Activated CD8-positive, alpha-beta T cell treated with anti-CD3 and anti-CD28 coated beads for 36 hours (primary cell): ENCODE measurements at regions of chr3 and their contacts with region 1.

Region 1: DNA sequence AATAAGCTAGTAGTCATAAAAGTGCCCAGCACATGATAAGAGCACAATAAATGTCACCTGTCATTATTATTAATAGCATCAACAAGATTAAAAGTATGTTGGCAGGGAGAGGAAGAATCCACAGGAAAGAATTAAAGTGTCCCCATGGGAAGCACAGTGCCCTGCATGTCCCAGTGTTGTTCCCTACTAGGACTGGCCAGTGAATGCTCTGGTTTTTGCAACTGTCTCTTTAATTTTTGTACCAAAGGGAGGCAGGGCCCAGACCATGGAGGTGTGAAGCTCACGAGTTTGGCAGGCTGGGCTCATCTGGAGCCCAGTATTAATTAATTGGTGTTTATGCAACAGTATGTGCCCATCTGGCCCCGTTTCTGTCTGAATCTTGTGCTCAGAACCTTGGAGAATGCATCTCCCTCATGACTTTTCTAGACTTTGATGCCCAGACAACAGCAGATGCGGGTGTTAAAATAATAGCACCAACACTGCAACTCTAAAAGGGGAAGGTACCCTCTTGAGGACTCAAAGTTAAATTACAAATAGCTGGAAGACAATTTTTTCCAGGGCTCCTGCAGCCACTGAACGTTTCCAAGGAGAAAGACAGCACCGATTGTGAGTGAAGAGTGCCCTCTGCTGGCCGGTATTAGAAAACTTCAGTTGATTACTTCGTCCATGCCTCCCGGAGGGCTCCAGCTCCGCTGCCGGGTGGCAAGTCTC is 71.9 kb upstream of the SPATA12 start:
- DNase-seq: peak; percentile 79
- ATAC-seq: peak; percentile 57
- H3K4me3 Mint-ChIP-seq: no peak overlapping the region
- H3K27ac Mint-ChIP-seq: no peak overlapping the region
- H3K4me1 Mint-ChIP-seq: peaks cover 33% of the 10 kb centered on the region
- H3K27me3 Mint-ChIP-seq: peaks cover 7% of the 10 kb centered on the region
- CTCF ChIP-seq: peak; percentile 99

Region 2: DNA sequence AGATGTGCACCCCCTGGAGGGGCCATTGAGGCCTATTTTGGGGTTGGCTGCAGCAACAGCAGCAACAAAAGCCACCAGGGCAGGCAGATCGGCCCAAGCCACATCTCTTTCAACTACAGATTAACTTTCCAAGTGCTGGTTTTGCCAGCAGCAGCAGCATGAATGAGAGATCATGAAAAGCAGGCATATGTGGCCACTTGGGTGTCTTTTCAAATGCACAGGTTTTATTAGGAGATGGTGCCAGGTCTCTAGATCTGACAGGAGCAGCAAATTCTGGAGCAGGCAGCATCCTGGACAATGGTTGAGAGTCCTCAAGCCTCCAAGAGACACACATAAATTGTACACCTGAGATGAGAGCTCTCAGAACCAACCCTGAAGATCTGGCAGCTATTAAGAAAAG is 463.3 kb before region 1 on chr3:
- CTCF ChIA-PET with region 1: no interaction called
- POLR2A ChIA-PET with region 1: no interaction called
- intact Hi-C with region 1: no loop called
- DNase-seq: no peak
- ATAC-seq: no peak
- H3K4me3 Mint-ChIP-seq: no peak overlapping the region
- H3K27ac Mint-ChIP-seq: no peak overlapping the region
- H3K4me1 Mint-ChIP-seq: no peaks in the 10 kb centered on the region
- H3K27me3 Mint-ChIP-seq: peaks cover 2% of the 10 kb centered on the region
- CTCF ChIP-seq: no peak

Region 3: GRCh38 chr3:56693750-56694149 is 294.9 kb before region 1 on chr3:
- CTCF ChIA-PET with region 1: interaction called, 47 read pairs
- POLR2A ChIA-PET with region 1: no interaction called
- intact Hi-C with region 1: no loop called
- DNase-seq: no peak
- ATAC-seq: no peak
- H3K4me3 Mint-ChIP-seq: peak overlapping the region; percentile 79
- H3K27ac Mint-ChIP-seq: peak overlapping the region; percentile 27
- H3K4me1 Mint-ChIP-seq: peaks cover 44% of the 10 kb centered on the region
- H3K27me3 Mint-ChIP-seq: no peaks in the 10 kb centered on the region
- CTCF ChIP-seq: no peak

Region 4: DNA sequence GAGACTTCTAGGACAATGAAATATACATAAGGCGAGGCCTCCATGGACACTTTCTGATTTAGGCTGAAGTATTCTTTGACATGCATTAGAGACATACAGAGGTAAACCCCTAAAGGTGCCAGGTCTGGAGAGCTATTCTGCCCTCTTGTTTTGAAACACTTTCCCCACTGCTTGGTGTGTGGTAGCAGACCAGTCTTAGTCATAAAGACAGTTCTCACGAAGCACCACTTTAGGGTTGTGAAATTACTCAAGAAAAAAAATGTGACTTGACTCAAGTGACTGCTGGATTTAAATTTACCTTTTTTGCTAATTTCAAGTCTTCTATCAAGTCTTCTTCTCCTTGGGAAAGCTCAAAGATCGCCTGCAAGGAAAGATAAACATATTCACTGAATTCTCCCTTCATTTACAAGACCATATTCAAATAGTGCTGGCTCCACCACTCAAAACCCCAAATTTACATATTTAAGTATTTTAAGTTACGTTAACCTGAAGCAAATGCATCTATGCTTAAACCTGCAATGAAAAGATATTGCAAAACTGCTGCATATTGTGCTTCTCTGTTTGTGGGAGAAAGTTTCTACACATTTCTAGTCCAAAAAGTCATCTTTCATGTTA is 235.3 kb before region 1 on chr3:
- CTCF ChIA-PET with region 1: interaction called, 11 read pairs
- POLR2A ChIA-PET with region 1: no interaction called
- intact Hi-C with region 1: no loop called
- DNase-seq: peak; percentile 75
- ATAC-seq: peak; percentile 93
- H3K4me3 Mint-ChIP-seq: no peak overlapping the region
- H3K27ac Mint-ChIP-seq: peak overlapping the region; percentile 73
- H3K4me1 Mint-ChIP-seq: peaks cover 63% of the 10 kb centered on the region
- H3K27me3 Mint-ChIP-seq: no peaks in the 10 kb centered on the region
- CTCF ChIP-seq: no peak

Region 5: DNA sequence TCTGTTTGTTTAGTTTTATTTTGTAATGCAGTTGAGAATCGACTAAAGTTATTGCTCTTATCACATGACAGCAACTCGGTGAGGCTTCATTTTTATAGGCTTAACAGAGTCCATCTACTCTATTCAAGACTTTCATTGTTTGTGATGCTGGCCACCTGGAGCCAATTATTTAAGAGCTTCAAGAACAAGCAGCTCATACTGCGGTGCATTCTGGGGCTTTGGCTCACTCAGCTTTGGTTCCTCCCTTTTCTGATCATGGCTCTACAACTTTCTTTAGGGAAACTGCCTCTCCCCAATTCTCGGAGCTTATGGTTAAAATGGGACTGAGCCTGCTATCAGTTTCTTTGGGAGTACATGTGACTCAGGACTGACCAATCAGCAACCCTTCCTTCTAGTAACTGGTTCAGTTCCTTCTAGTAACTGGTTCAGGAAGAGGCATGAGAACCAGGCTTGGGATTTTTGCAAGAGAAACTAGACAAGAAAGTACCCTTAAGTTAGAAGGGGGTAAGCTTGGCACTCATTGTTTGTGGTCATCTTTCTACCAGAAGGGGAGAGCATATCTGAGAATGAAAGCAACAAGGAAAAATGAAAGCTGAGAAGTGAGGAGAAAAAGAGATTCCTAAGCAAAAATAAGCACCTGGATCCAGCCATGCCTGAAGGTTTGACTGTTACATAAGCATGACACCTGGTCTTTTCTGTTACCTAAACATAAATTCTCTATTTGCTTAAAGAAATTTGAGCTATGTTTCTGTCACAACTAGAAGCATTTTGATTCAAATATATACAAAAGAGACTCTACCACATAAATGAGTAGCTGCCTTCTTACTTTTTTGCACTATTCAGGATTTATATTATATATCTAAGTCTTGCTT is 162.8 kb before region 1 on chr3:
- CTCF ChIA-PET with region 1: interaction called, 25 read pairs
- POLR2A ChIA-PET with region 1: no interaction called
- intact Hi-C with region 1: no loop called
- DNase-seq: no peak
- ATAC-seq: no peak
- H3K4me3 Mint-ChIP-seq: no peak overlapping the region
- H3K27ac Mint-ChIP-seq: no peak overlapping the region
- H3K4me1 Mint-ChIP-seq: peaks cover 44% of the 10 kb centered on the region
- H3K27me3 Mint-ChIP-seq: no peaks in the 10 kb centered on the region
- CTCF ChIP-seq: no peak

Region 6: DNA sequence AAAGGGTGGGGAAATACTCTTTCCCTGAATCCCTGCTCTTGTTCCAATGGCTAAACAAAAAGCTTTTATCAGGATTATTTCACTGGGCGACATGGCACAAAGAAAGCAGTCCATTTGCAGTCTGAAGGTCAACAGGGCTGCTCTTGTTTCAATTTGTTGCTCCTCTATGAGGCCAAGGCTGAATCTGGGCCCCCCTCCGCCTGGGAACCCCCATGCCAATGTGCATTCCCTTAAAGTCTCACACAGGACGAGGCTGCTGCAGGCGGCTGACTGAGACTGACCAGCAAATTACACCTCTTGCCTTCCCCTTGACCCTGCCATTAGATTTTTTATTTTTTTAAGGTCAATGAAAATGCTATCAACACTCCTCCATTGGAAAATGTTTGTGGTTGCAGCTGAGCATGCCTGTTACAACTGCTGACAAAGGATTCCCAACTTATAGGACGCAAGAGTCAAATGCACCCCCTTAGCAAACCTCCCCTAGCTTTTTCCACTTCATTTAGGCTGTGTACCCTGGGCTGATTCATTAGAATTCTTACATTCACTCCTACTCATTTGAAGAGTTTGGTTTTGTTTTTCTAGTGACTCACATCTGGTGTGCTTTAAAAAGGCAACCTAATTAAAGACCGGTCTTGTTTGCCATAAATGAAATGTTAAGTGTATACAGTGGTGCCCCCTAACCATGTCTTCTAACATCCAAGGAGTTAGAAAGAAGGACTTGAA is 126.1 kb before region 1 on chr3:
- CTCF ChIA-PET with region 1: interaction called, 23 read pairs
- POLR2A ChIA-PET with region 1: no interaction called
- intact Hi-C with region 1: loop called (anchors 5 kb)
- DNase-seq: peak; percentile 62
- ATAC-seq: peak; percentile 75
- H3K4me3 Mint-ChIP-seq: peak overlapping the region; percentile 28
- H3K27ac Mint-ChIP-seq: peak overlapping the region; percentile 87
- H3K4me1 Mint-ChIP-seq: peaks cover 75% of the 10 kb centered on the region
- H3K27me3 Mint-ChIP-seq: no peaks in the 10 kb centered on the region
- CTCF ChIP-seq: no peak

Region 7: DNA sequence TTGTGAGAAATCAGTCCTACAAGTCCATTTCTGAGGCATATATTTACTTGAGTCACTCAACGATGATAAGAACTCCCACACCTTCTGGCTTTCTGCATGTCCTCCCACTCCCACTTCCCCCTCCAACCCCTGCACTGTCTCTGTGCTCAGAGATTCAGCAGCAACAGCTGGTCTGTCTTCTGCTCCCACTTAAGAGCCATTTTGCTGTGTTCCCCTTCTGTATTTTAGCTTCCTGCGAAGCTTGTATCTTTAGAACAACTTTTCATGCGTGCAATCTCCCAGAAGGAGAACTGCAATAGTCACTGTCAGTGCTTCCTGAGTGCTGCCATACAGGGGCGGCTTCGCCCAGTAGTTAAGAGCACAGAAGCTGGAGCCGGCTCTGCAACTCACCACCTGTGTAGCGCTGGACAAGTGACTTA is 18.1 kb before region 1 on chr3:
- CTCF ChIA-PET with region 1: interaction called, 21 read pairs
- POLR2A ChIA-PET with region 1: no interaction called
- intact Hi-C with region 1: no loop called
- DNase-seq: peak; percentile 20
- ATAC-seq: no peak
- H3K4me3 Mint-ChIP-seq: no peak overlapping the region
- H3K27ac Mint-ChIP-seq: no peak overlapping the region
- H3K4me1 Mint-ChIP-seq: peaks cover 8% of the 10 kb centered on the region
- H3K27me3 Mint-ChIP-seq: no peaks in the 10 kb centered on the region
- CTCF ChIP-seq: no peak